Posterior vena cava (tissue), 2 donors: ENCODE measurements at regions of chr3 and their contacts with region 1.

Region 1: DNA sequence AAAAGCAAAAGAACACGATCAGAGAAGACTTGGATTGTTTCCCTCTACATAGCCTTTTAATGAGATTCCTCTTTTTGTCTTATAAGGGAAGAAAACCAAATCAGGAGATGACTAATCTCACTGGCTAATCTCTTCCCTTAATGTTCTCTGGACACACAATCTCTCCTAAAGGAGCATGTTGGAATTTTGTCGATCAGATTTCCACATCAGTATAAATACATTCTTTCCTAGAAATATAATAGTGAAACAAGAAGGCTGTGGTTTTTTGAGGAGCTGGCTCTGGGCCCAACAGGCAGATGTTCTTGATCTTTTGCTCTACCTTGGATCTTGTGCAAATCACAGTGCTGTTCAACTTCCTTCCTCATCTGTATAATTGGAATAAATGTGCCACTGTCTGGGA is 94.0 kb downstream of the GTPBP8 start:
- DNase-seq: peak; percentile 88

Region 2: GRCh38 chr3:113117511-113118234 is 32.9 kb after region 1 on chr3:
- intact Hi-C with region 1: loop called in 1 of 2 experiments (anchors 1 kb)
- DNase-seq: no peak

Region 3: DNA sequence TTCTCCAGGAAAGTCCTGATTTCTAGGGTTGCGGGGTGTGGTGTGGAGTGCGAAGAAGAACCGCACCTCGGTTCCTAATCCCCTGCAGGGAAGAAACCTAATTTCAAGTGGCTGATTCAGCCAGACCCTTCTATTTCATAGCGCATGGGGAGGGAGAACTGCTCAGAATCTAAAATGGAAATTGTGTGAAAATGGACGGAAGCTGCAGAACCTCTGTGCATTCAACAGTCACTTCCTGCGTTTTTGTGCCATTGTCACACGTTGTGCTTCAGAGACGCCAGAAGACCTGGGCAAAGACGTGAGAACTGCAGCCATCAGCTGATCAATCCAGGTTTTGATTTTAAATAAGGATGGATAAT is 448.7 kb after region 1 on chr3:
- intact Hi-C with region 1: no loop called
- DNase-seq: no peak